A673 (cell line): ENCODE measurements at regions of chr9 and their contacts with region 1.

Region 1: DNA sequence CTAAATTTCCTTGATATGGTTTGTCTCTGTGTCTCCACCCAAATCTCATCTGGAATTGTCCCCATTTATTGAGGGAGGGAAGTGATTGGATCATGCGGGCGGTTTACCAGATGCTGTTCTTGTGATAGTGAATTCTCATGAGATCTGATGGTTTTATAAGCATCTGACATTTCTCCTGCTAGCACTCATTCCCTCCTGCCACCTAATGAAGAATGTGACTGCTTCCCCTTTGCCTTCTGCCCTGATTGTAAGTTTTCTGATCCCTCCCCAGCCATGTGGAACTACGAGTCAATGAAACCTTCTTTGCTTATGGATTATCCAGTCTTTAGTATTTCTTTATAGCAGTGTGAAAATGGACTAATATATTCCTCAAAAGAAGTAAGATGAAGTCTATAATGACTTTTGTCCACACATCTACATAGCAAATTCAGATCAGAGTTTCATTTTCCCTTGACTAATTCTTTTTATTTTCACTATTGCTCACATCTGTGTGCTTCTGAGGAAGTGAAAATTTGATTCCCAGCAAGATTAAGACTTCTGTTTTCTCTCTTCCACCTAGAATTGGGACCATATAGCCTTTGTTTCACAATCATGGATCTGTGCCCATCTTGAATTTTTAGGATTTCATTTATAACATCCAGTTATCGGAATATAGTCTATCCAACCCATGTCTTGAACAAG is 393.5 kb downstream of the DMAC1 start:
- DNase-seq: no peak
- H3K4me3 ChIP-seq: no peak overlapping the region
- H3K27ac ChIP-seq: no peak overlapping the region
- H3K4me1 ChIP-seq: no peaks in the 10 kb centered on the region
- H3K27me3 ChIP-seq: no peaks in the 10 kb centered on the region
- CTCF ChIP-seq: no peak

Region 2: DNA sequence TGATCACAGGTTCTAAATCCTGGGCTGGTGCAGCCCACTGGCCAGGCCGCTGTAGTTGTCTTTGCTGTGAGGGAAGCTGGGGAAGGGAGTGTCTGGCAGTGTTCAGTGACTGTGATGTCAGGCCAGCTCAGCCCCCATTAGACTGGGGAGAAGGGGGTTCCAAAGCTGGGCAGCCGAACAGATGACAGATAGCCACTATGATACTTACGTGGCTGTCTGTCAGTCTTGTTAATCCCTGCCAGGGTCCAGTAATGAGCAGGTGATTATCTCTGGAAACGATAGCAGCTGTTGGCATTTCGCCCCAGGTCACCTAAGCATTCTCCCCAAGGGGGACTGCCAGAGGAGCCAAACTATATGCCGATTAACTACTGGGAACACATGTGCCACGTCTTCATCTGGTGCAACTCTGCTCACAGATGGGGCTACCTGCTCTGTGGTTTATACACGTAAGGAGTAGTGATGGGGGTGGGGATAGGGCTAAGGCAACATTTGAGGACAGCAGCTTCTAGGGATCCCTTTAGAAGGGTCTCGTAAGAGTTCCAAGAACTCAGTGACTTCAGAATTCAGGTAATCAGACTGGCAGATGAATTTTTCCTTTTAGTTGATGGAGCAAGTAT is 252.0 kb before region 1 on chr9:
- CTCF ChIA-PET with region 1: no interaction called
- POLR2A ChIA-PET with region 1: no interaction called
- intact Hi-C with region 1: no loop called
- DNase-seq: no peak
- H3K4me3 ChIP-seq: no peak overlapping the region
- H3K27ac ChIP-seq: no peak overlapping the region
- H3K4me1 ChIP-seq: no peaks in the 10 kb centered on the region
- H3K27me3 ChIP-seq: no peaks in the 10 kb centered on the region
- CTCF ChIP-seq: no peak

Region 3: DNA sequence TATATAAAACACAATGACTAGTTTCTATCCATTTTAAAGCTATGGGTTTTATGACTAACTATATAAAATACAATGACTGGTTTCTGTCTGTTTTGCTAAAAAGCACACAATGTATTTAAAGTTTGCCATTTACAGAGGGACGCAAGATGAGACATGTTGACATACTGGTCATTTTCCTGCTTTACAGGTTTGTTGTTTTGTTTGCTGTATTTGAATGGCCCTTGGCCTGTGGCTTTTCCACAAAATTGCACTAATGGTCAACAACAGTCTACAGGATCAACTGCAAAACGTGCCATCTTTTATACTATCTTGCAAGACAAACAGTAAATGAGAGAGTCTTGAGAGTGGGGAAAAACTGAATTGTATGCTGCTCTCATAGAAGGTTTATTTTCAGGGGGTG is 20.3 kb before region 1 on chr9:
- CTCF ChIA-PET with region 1: no interaction called
- POLR2A ChIA-PET with region 1: no interaction called
- intact Hi-C with region 1: loop called (anchors 2 kb)
- DNase-seq: no peak
- H3K4me3 ChIP-seq: no peak overlapping the region
- H3K27ac ChIP-seq: no peak overlapping the region
- H3K4me1 ChIP-seq: no peaks in the 10 kb centered on the region
- H3K27me3 ChIP-seq: no peaks in the 10 kb centered on the region
- CTCF ChIP-seq: no peak